Activated CD4-positive, alpha-beta memory T cell treated with anti-CD3 and anti-CD28 coated beads, Interleukin-2, amount 10 ng/mL, durations not matched to agents 7 days and 5 days (primary cell): ENCODE measurements at regions of chr16 and their contacts with region 1.

Region 1: DNA sequence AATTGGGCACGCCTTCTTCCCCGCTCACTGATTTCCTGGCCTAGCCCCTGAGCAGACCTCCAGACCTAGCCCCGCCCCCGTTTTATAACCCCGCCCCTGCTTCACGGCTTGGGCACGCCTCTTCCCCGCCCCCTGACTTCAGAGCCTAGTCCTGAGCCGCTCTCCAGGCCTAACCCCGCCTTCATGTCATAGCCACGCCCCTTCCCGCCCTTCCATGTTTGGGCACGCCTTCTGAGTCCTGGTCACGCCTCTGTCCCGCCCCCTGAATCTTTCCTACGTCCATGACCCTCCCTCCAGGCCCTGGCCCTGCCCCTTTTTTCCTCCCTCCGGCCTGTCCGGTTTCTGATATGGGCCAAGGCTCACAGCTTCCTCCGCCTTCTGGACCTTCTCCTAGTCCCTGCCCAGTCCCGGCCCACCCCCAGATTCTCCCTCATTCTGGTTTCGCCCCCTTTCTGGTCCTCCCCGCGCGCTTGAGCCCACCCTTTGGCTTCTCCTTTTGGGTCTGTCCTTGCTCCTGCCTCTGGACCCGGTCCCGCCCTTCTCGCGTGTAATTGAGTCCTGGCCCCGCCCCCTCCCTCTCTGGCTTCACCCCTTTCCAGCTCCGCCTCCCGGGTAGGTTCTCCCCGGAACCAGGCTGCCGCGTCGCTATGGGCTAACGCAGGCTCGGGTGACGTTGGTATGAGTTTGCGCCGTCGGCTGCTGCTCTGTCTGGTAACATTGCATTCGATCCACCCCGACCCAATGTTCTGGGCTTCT is 15.1 kb upstream of the EEF2K start:
- DNase-seq: peak; percentile 99
- H3K4me3 Mint-ChIP-seq: peak overlapping the region; percentile 87
- H3K27ac Mint-ChIP-seq: peak overlapping the region; percentile 99
- H3K4me1 Mint-ChIP-seq: peaks cover 55% of the 10 kb centered on the region
- H3K27me3 Mint-ChIP-seq: peaks cover 1% of the 10 kb centered on the region

Region 2: DNA sequence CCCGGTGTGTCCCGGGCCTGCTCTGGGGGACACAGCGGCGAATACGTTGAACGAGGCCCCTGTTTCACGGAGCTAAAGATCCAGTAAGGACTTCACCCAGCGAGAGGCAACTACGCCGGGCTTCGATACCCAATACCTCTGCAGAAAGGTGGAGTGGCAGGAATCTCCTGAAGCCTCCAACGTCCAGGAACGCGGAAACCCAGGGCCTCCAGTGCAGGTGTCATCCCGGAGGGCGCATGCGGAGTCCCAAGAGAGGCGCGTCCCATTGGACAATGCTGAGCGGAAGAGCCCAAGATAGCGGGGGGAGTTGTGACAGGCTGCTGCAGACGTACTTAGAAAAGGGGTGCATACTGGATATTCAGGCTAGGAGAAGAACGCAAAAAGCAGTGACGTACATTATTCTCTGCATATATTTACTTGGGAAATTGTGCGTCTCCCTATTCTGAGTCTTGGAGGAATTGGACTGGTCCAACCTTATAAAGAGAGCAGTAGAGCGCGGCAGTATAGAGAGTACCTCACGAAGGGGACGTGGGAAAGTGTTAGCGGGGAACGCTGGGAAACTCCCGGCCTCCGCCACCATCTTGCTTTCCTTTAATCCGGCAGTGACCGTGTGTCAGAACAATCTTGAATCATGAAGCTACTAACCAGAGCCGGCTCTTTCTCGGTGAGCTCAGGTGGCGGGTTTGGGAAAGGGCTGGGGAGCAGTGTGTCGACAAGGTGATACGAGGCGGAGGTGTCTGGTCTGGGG is 238.0 kb before region 1 on chr16 and contains the start of gene UQCRC2:
- CTCF ChIA-PET with region 1: interaction called, 15 read pairs
- POLR2A ChIA-PET with region 1: interaction called, 40 read pairs
- DNase-seq: peak; percentile 87
- H3K4me3 Mint-ChIP-seq: peak within 1 kb of the TSS; percentile 97
- H3K27ac Mint-ChIP-seq: peak within 1 kb of the TSS; percentile 82
- H3K4me1 Mint-ChIP-seq: peaks cover 69% of the 10 kb centered on the region
- H3K27me3 Mint-ChIP-seq: no peaks in the 10 kb centered on the region
- total RNA-seq, gene UQCRC2: 216 to 225 TPM

Region 3: DNA sequence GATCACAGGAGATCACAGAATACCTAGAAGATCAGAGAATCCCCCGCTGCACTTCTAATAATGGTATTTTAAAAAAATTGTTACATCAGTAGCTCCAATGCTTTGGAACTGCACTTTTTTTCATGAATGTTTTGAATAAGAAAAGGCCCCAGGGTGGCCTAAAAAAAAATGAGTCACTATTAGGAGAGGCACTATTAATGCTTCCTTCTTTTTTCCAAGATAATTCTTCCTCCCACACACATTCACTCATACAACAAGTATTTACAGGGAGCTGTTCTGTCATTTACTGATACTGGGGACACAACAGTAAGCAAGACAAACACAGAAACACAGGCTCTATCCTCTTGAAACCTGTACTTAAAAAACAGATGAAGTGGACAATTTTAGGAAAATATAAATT is 189.4 kb before region 1 on chr16:
- CTCF ChIA-PET with region 1: interaction called, 79 read pairs
- POLR2A ChIA-PET with region 1: interaction called, 40 read pairs
- DNase-seq: no peak
- H3K4me3 Mint-ChIP-seq: no peak overlapping the region
- H3K27ac Mint-ChIP-seq: no peak overlapping the region
- H3K4me1 Mint-ChIP-seq: peaks cover 11% of the 10 kb centered on the region
- H3K27me3 Mint-ChIP-seq: no peaks in the 10 kb centered on the region

Region 4: GRCh38 chr16:22098405-22099255 is 92.3 kb before region 1 on chr16:
- CTCF ChIA-PET with region 1: interaction called, 25 read pairs
- POLR2A ChIA-PET with region 1: no interaction called
- DNase-seq: no peak
- H3K4me3 Mint-ChIP-seq: no peak overlapping the region
- H3K27ac Mint-ChIP-seq: no peak overlapping the region
- H3K4me1 Mint-ChIP-seq: peaks cover 1% of the 10 kb centered on the region
- H3K27me3 Mint-ChIP-seq: peaks cover 25% of the 10 kb centered on the region

Region 5: GRCh38 chr16:22206013-22206841 is 15.3 kb after region 1 on chr16 and contains the start of gene EEF2K:
- CTCF ChIA-PET with region 1: interaction called, 21 read pairs
- POLR2A ChIA-PET with region 1: interaction called, 48 read pairs
- DNase-seq: peak; percentile 89
- H3K4me3 Mint-ChIP-seq: peak within 1 kb of the TSS; percentile 99
- H3K27ac Mint-ChIP-seq: peak within 1 kb of the TSS; percentile 83
- H3K4me1 Mint-ChIP-seq: peaks cover 44% of the 10 kb centered on the region
- H3K27me3 Mint-ChIP-seq: no peaks in the 10 kb centered on the region
- total RNA-seq, gene EEF2K: 22.1 to 24.8 TPM

Region 6: GRCh38 chr16:22346483-22346882 is 155.5 kb after region 1 on chr16:
- CTCF ChIA-PET with region 1: no interaction called
- POLR2A ChIA-PET with region 1: no interaction called
- DNase-seq: no peak
- H3K4me3 Mint-ChIP-seq: no peak overlapping the region
- H3K27ac Mint-ChIP-seq: no peak overlapping the region
- H3K4me1 Mint-ChIP-seq: no peaks in the 10 kb centered on the region
- H3K27me3 Mint-ChIP-seq: no peaks in the 10 kb centered on the region

Region 7: DNA sequence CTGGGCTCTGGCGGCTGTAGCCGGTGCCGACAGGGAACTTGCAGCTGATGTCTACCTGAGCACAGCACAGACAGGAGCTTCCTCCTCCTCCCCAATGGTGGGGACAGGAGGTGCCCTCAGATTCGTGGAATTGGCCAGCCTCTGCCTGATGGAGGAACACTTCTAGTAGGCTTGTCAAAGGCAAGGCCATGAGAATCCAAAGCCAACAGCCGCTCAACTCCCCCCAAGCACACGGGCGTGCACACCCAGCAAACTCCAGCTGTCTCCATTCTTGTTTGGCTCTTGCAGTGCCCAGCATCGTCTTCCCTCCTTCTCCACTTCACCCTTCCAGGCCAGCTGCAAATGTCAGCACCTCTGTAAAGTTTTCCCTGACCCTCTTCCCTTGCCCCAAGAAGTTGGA is 1026.7 kb after region 1 on chr16:
- CTCF ChIA-PET with region 1: no interaction called
- POLR2A ChIA-PET with region 1: no interaction called
- DNase-seq: no peak
- H3K4me3 Mint-ChIP-seq: no peak overlapping the region
- H3K27ac Mint-ChIP-seq: no peak overlapping the region
- H3K4me1 Mint-ChIP-seq: no peaks in the 10 kb centered on the region
- H3K27me3 Mint-ChIP-seq: peaks cover 2% of the 10 kb centered on the region